ENCODE measurements at regions of chr5 and their contacts with region 1.

Region 1: DNA sequence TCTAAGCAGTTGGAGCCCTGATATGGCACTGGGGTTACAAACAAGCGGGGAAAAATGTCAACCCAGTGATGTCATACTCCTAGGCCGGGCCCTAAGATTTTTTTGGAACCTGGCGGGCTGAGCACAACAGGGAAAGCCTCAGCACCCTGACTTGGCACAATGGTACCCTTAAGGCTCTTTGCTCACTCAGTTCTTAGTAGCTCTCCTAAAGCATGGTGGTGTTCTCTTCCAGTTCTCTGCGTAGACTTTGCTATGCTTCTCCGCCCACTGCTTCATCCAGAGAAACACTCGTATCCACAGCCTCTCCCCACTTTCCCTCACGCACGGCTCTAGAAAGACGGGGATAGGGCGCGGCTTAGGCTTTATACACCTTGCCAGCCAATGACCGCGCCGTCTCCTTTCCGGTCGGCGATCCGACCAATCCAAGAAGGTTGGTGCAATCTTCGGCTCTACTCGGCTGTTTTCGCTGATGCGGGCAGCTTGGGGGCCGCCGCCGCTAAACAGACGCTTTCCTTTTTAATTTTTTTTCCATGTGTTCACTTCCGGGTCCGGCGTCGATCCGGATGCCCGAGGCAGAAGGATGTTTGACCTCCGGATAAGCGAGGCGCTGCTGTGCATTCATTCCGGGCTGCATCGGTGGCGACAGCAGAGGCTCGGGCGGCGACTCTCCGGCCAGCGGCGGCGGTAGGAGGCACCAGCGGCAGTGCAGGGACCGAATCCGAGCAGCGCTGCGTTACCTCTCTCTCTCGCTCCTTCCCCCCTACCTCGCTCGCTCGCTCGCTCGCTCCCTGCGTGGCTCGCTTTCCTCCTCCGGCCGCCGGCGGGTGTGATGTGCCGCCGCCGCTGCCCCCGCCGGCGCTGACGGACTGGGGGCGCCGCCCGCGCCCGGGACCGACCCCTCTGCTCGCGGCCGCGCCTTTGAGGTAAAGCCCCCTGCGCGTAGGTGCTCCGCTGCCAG is at the start of gene CSNK1G3:
- DNase-seq: peak in 1 of 2 donors; percentile 99
- H3K4me3 ChIP-seq: peak within 1 kb of the TSS; percentile 81 to 85
- H3K27ac ChIP-seq: peak within 1 kb of the TSS; percentile 92
- H3K4me1 ChIP-seq: peaks cover 13% of the 10 kb centered on the region
- H3K27me3 ChIP-seq: no peaks in the 10 kb centered on the region
- CTCF ChIP-seq: no peak
- POLR2A ChIP-seq: peak in 1 of 2 donors; percentile 80
- total RNA-seq, gene CSNK1G3: 34.4 TPM

Region 2: DNA sequence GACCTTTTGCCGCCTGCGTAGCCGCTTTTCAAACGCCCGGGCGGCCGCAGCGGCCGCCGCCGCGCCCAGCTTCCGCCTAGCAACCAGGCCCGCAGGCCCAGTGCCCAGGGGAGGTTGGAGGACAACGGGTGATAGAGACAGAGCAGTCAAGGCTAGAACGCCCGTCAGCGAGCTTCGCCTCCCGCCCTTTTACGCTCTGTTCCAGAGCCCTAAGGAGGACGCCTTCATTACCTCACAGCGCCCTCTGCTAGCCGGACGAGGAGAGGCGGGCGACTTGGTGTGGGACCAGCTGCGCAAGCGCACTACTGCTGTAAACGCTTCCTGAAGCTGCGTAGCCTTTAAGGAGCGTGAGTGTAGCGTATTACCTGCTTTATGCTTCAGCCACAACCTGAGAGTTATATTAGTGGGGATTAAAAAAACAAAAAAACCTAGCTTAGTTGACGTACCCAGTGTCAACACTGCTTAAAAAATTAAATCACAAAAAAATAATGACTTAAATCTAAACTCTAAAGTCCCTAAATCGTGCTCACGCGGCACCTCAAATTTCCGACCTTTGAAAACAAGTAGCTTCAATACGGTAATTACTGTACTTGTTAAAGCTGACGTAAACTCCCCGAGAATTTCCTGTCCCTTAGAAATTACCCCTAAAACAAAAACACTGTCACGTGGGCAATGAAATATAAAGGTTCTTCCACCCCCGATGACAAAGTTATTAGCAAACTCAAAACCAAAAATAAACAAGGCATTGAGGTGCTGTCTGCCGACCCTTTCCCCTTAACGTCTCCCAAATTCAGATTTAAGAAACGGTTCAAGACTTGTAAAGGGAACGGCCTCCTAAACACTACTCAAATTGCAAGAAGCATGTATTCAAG is 88.4 kb before region 1 on chr5 and contains the start of gene CEP120:
- intact Hi-C with region 1: loop called (anchors 5 kb)
- DNase-seq: peak; percentile 98 to 99
- H3K4me3 ChIP-seq: peak within 1 kb of the TSS; percentile 87 to 96
- H3K27ac ChIP-seq: peak within 1 kb of the TSS; percentile 96
- H3K4me1 ChIP-seq: peaks cover 35% of the 10 kb centered on the region
- H3K27me3 ChIP-seq: no peaks in the 10 kb centered on the region
- CTCF ChIP-seq: peak in 2 of 3 experiments; percentile 61 to 70
- POLR2A ChIP-seq: peak in 1 of 2 donors; percentile 50
- total RNA-seq, gene CEP120: 16.9 TPM

Region 3: DNA sequence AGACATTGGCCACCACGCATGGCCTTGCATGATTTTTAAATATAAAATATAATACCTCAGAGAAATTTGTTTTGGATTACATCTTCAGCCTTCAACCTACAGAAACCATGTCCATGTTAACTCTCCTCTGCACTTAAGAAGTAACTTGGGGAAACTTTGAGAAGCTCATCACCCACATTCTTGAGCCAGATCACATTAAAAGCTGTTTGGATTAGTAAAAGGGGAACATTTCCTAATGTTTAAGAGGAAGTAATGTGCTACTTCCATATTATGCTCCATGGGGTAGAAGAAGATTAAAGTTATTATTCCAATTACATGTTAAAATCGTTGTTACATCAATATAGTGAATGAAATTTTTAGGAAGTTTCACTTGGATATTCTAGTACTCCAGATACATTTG is 78.3 kb before region 1 on chr5:
- intact Hi-C with region 1: no loop called
- DNase-seq: no peak
- H3K4me3 ChIP-seq: no peak overlapping the region
- H3K27ac ChIP-seq: no peak overlapping the region
- H3K4me1 ChIP-seq: peaks cover 12% of the 10 kb centered on the region
- H3K27me3 ChIP-seq: no peaks in the 10 kb centered on the region
- CTCF ChIP-seq: no peak
- POLR2A ChIP-seq: no peak

Region 4: DNA sequence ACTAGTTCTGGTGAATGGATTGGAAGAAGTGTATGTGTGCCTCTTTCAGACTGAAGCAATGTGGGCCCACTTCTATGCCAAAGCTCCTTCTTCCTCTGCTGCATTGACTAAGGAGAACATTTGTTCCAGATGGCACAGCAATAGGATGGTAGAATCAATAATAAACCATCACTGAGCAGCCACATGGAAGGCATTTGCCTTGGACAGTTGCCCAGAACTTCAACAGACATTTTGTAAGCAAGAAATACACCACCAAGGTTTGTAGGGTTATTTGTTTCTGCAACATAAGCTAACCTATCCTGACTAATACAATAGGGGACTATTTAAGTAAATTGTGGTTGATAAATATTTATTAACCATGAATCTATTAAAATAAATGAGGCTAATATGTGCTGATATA is 37.7 kb before region 1 on chr5:
- intact Hi-C with region 1: no loop called
- DNase-seq: no peak
- H3K4me3 ChIP-seq: no peak overlapping the region
- H3K27ac ChIP-seq: no peak overlapping the region
- H3K4me1 ChIP-seq: no peaks in the 10 kb centered on the region
- H3K27me3 ChIP-seq: no peaks in the 10 kb centered on the region
- CTCF ChIP-seq: no peak
- POLR2A ChIP-seq: no peak

Measured in vagina (tissue), 2 donors.